ENCODE measurements at regions of chr12 and their contacts with region 1.

Region 1: GRCh38 chr12:100493396-100494012 is 19.8 kb downstream of the NR1H4 start:
- DNase-seq: no peak
- ATAC-seq: no peak
- H3K4me3 ChIP-seq: no peak overlapping the region
- H3K27ac ChIP-seq: no peak overlapping the region
- H3K4me1 ChIP-seq: no peaks in the 10 kb centered on the region
- H3K27me3 ChIP-seq: no peaks in the 10 kb centered on the region
- CTCF ChIP-seq: no peak
- POLR2A ChIP-seq: no peak

Region 2: DNA sequence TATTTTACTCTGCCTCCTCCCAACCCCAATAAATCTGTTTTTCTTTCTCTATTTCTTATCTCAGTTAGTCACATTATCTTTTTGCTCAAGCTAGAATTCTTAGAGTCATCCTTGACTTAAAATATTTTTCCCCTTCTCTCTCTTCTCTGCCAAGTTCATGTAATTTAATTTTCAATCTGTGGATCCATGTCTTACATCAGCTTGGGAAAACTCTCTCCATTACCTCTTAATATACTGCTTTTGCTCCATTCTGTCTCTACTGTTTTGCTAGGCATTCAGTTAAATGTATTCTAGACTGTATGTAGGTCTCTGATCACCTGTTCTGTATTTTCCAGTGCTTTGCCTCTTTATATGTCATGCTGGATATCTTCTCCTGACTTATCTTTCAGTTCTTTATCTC is 70.9 kb before region 1 on chr12:
- in situ Hi-C with region 1: no loop called
- intact Hi-C with region 1: no loop called
- DNase-seq: no peak
- ATAC-seq: no peak
- H3K4me3 ChIP-seq: no peak overlapping the region
- H3K27ac ChIP-seq: no peak overlapping the region
- H3K4me1 ChIP-seq: no peaks in the 10 kb centered on the region
- H3K27me3 ChIP-seq: no peaks in the 10 kb centered on the region
- CTCF ChIP-seq: no peak
- POLR2A ChIP-seq: no peak

Region 3: DNA sequence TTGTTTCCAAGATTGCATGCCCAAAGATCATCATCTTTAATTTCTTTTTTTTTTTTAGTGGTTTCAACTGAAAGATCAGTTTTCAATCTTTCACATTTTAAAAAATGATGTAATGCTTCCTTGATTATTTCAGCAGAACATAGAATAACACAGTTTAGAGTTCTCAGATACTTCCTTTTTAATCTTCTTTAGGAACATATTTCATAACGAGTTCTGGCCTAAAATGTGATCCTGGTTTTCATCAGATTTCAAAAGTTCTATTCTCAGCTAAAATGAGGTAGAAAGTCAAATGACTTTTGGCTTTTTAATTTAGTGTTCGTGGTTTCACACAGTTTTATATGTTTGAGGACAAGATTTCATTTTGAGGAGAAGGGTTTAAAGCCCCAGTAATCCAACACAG is 59.8 kb before region 1 on chr12:
- in situ Hi-C with region 1: no loop called
- intact Hi-C with region 1: loop called (anchors 5 kb)
- DNase-seq: no peak
- ATAC-seq: no peak
- H3K4me3 ChIP-seq: no peak overlapping the region
- H3K27ac ChIP-seq: no peak overlapping the region
- H3K4me1 ChIP-seq: no peaks in the 10 kb centered on the region
- H3K27me3 ChIP-seq: no peaks in the 10 kb centered on the region
- CTCF ChIP-seq: no peak
- POLR2A ChIP-seq: no peak